ENCODE measurements at regions of chr9 and their contacts with region 1.

Region 1: DNA sequence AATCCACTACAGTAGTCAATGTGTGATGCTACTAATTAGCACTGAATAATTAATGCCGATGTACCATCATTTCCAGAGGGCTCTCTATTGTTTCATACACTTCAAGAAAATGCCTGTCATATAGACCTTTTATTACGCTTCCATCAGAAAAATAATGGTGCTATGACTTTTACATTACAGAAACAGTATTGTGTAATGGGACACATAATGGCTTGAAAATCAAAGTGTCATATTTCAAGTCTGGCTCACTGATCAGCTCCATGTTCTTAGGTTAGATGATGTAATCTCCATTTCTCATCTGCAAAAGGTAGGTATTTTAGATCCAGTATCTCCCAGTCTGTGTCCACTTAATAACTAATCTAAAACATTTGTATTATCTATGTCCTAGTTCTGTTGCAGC is 990.6 kb upstream of the TYRP1 start:
- DNase-seq: no peak
- ATAC-seq: no peak
- H3K4me3 ChIP-seq: no peak overlapping the region
- H3K27ac ChIP-seq: no peak overlapping the region
- H3K4me1 ChIP-seq: no peaks in the 10 kb centered on the region
- H3K27me3 ChIP-seq: no peaks in the 10 kb centered on the region
- CTCF ChIP-seq: no peak

Region 2: DNA sequence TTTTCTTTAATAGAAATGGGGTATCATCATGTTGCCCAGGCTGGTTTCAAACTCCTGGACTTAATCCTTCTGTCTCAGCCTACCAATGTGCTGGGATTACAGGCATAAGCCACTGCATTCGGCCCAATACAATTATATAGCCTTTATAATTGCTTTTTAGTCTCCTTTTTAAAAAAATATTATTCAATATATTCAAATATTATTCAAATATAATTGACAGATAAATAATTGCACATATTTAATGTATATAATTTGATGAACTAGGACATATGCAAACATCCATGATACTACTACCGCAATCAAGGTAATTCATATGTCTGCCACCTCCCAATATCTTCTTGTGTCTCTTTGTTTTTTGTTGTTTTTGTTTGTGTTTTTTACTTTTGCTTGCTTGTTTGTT is 195.6 kb before region 1 on chr9:
- intact Hi-C with region 1: no loop called
- DNase-seq: no peak
- ATAC-seq: no peak
- H3K4me3 ChIP-seq: no peak overlapping the region
- H3K27ac ChIP-seq: no peak overlapping the region
- H3K4me1 ChIP-seq: no peaks in the 10 kb centered on the region
- H3K27me3 ChIP-seq: no peaks in the 10 kb centered on the region
- CTCF ChIP-seq: no peak

Region 3: GRCh38 chr9:11646831-11647230 is 55.7 kb before region 1 on chr9:
- intact Hi-C with region 1: loop called in 1 of 10 experiments (anchors 10 kb)
- DNase-seq: no peak
- ATAC-seq: no peak
- H3K4me3 ChIP-seq: no peak overlapping the region
- H3K27ac ChIP-seq: no peak overlapping the region
- H3K4me1 ChIP-seq: no peaks in the 10 kb centered on the region
- H3K27me3 ChIP-seq: no peaks in the 10 kb centered on the region
- CTCF ChIP-seq: no peak